Heart left ventricle (tissue), 16 donors: ENCODE measurements at regions of chr15 and their contacts with region 1.

Region 1: GRCh38 chr15:73200339-73200738 is 148.1 kb downstream of the NEO1 start:
- DNase-seq: no peak
- ATAC-seq: no peak
- H3K4me3 ChIP-seq: no peak overlapping the region
- H3K27ac ChIP-seq: no peak overlapping the region
- H3K4me1 ChIP-seq: no peaks in the 10 kb centered on the region
- H3K27me3 ChIP-seq: no peaks in the 10 kb centered on the region
- CTCF ChIP-seq: no peak
- POLR2A ChIP-seq: no peak

Region 2: GRCh38 chr15:73087098-73087497 is 113.2 kb before region 1 on chr15:
- intact Hi-C with region 1: no loop called
- DNase-seq: no peak
- ATAC-seq: no peak
- H3K4me3 ChIP-seq: no peak overlapping the region
- H3K27ac ChIP-seq: no peak overlapping the region
- H3K4me1 ChIP-seq: no peaks in the 10 kb centered on the region
- H3K27me3 ChIP-seq: peaks cover 0 to 3% (median 0%) of the 10 kb centered on the region in 9 donors
- CTCF ChIP-seq: no peak
- POLR2A ChIP-seq: no peak

Region 3: GRCh38 chr15:73156431-73157191 is 43.7 kb before region 1 on chr15:
- intact Hi-C with region 1: loop called in 1 of 10 experiments (anchors 10 kb)
- DNase-seq: no peak
- ATAC-seq: no peak
- H3K4me3 ChIP-seq: no peak overlapping the region
- H3K27ac ChIP-seq: no peak overlapping the region
- H3K4me1 ChIP-seq: peaks cover 0 to 2% (median 0%) of the 10 kb centered on the region in 12 donors
- H3K27me3 ChIP-seq: no peaks in the 10 kb centered on the region
- CTCF ChIP-seq: no peak
- POLR2A ChIP-seq: no peak

Region 4: DNA sequence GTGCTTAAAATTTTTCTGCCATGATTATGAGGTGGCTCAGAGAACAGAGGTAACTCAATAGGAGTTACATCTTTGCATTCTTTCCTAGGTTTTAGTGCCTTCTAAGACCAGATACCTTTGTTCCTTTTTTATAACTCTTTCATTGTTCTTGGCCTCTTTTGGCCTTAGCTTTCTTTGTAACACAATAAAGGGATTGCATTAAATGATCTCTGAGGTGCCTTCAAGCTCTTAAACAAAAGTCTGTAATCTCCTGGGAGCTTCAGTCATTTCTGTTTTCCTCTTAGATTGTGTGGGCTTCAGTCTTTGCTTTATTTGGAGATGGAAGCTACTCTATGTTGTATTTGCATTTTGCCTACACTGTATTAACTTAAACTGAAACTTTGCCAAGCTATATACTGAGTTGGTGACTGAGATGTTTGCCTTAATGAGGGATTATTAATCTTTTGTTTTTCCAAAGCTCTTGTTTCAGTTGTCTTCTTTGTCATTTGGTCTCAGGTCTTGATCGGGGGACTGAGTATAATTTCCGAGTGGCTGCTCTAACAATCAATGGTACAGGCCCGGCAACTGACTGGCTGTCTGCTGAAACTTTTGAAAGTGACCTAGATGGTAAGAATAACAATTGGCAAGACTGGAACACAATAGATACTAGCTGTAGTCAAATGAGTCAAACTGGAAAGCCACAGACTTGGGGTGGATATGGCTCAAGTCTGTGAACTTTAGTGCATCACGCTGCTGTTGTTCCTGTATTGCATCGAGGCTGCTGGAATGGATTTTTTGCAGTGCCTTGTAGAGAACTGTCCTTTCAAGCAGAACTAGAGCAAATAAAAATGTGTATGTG is 58.2 kb after region 1 on chr15:
- intact Hi-C with region 1: no loop called
- DNase-seq: no peak
- ATAC-seq: no peak
- H3K4me3 ChIP-seq: no peak overlapping the region
- H3K27ac ChIP-seq: no peak overlapping the region
- H3K4me1 ChIP-seq: no peaks in the 10 kb centered on the region
- H3K27me3 ChIP-seq: no peaks in the 10 kb centered on the region
- CTCF ChIP-seq: no peak
- POLR2A ChIP-seq: no peak